Vagina (tissue), 2 donors: ENCODE measurements at regions of chr3 and their contacts with region 1.

Region 1: GRCh38 chr3:159804726-159805410 is 183.8 kb upstream of the IL12A start:
- DNase-seq: no peak
- H3K4me3 ChIP-seq: no peak overlapping the region
- H3K27ac ChIP-seq: no peak overlapping the region
- H3K4me1 ChIP-seq: peaks cover 29% of the 10 kb centered on the region
- H3K27me3 ChIP-seq: no peaks in the 10 kb centered on the region
- CTCF ChIP-seq: peak; percentile 47 to 74 (median 66)
- POLR2A ChIP-seq: no peak

Region 2: DNA sequence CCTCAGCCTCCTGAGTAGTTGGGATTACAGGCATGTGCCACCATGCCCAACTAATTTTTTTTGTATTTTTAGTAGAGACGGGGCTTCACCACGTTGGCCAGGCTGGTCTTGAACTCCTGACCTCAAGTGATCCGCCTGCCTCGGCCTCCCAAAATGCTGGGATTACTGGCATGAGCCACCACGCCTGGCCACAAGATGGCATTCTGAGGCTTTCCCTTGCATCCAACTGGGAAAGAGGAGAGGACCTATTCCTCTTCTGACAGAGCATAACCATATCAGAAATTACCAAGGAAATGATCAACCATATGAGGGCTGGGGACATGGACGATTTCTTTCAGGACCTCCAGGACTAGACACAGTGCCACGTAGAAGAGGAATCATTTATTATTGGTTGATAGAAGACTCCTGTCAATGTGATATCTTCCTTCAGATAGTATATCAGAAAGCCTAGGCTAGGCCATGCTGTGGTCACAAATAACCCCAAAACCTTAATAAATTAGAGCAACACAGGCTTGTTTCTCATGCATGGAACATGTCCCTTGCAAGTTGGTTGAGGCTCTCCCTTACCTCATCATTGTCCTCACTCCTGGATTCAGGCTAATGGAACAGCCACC is 188.5 kb before region 1 on chr3:
- intact Hi-C with region 1: loop called (anchors 10 kb)
- DNase-seq: no peak
- H3K4me3 ChIP-seq: no peak overlapping the region
- H3K27ac ChIP-seq: no peak overlapping the region
- H3K4me1 ChIP-seq: peaks cover 10% of the 10 kb centered on the region
- H3K27me3 ChIP-seq: no peaks in the 10 kb centered on the region
- CTCF ChIP-seq: peak; percentile 22 to 33 (median 29)
- POLR2A ChIP-seq: no peak